ENCODE measurements at regions of chr16 and their contacts with region 1.

Region 1: GRCh38 chr16:81095953-81096717 is at the start of gene GCSH:
- DNase-seq: peak; percentile 99
- H3K4me3 Mint-ChIP-seq: peak within 1 kb of the TSS; percentile 77
- H3K27ac Mint-ChIP-seq: peak within 1 kb of the TSS; percentile 61
- H3K4me1 Mint-ChIP-seq: peaks cover 8% of the 10 kb centered on the region
- H3K27me3 Mint-ChIP-seq: no peaks in the 10 kb centered on the region
- total RNA-seq, gene GCSH: 23.2 and 25.7 TPM in 2 replicates

Region 2: GRCh38 chr16:81035398-81035974 is 60.6 kb before region 1 on chr16 and contains the start of gene ATMIN:
- intact Hi-C with region 1: loop called (anchors 1 kb)
- DNase-seq: peak; percentile 80
- H3K4me3 Mint-ChIP-seq: peak within 1 kb of the TSS; percentile 82
- H3K27ac Mint-ChIP-seq: peak within 1 kb of the TSS; percentile 43
- H3K4me1 Mint-ChIP-seq: peaks cover 18% of the 10 kb centered on the region
- H3K27me3 Mint-ChIP-seq: no peaks in the 10 kb centered on the region
- total RNA-seq, gene ATMIN: 25.8 and 27.1 TPM in 2 replicates